ENCODE measurements at regions of chr15 and their contacts with region 1.

Region 1: GRCh38 chr15:72722071-72722696 is 36.2 kb downstream of the BBS4 start:
- DNase-seq: peak; percentile 77
- H3K4me3 Mint-ChIP-seq: no peak overlapping the region
- H3K27ac Mint-ChIP-seq: no peak overlapping the region
- H3K4me1 Mint-ChIP-seq: peaks cover 2% of the 10 kb centered on the region
- H3K27me3 Mint-ChIP-seq: no peaks in the 10 kb centered on the region

Region 2: GRCh38 chr15:72451224-72451623 is 271.0 kb before region 1 on chr15:
- CTCF ChIA-PET with region 1: no interaction called
- POLR2A ChIA-PET with region 1: no interaction called
- intact Hi-C with region 1: no loop called
- DNase-seq: no peak
- H3K4me3 Mint-ChIP-seq: no peak overlapping the region
- H3K27ac Mint-ChIP-seq: no peak overlapping the region
- H3K4me1 Mint-ChIP-seq: no peaks in the 10 kb centered on the region
- H3K27me3 Mint-ChIP-seq: no peaks in the 10 kb centered on the region

Region 3: GRCh38 chr15:72685925-72686794 is 36.0 kb before region 1 on chr15 and contains the starts of genes BBS4 and HIGD2B:
- CTCF ChIA-PET with region 1: interaction called, 14 read pairs
- POLR2A ChIA-PET with region 1: no interaction called
- intact Hi-C with region 1: no loop called
- DNase-seq: peak; percentile 93
- H3K4me3 Mint-ChIP-seq: peak within 1 kb of the TSS; percentile 85
- H3K27ac Mint-ChIP-seq: peak within 1 kb of the TSS; percentile 89
- H3K4me1 Mint-ChIP-seq: peaks cover 13% of the 10 kb centered on the region
- H3K27me3 Mint-ChIP-seq: no peaks in the 10 kb centered on the region
- total RNA-seq, gene BBS4: 12.6 to 15.5 TPM
- total RNA-seq, gene HIGD2B: 0.27 to 0.31 TPM

Region 4: DNA sequence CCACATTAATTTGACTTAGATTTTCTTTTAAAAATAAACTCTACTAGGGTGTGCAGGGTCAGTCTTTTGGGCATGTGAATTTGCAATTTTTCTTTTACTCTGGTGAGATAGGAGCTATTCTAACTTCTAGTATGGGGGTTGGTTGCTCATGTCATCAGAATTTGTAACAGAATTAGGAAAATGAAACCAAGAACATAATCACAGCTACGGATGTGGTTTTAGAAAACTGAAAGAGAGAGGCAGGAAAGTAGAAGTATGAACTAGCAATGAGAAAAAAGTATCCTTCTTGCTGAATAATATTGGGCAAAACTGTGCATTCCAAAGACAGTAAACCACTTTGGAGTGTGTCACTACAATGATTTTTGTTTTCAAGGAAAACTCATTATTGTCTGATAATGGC is 18.0 kb after region 1 on chr15:
- CTCF ChIA-PET with region 1: interaction called, 29 read pairs
- POLR2A ChIA-PET with region 1: no interaction called
- intact Hi-C with region 1: no loop called
- DNase-seq: no peak
- H3K4me3 Mint-ChIP-seq: no peak overlapping the region
- H3K27ac Mint-ChIP-seq: peak overlapping the region; percentile 43
- H3K4me1 Mint-ChIP-seq: peaks cover 35% of the 10 kb centered on the region
- H3K27me3 Mint-ChIP-seq: no peaks in the 10 kb centered on the region

Region 5: GRCh38 chr15:72758182-72758581 is 36.0 kb after region 1 on chr15:
- CTCF ChIA-PET with region 1: interaction called, 35 read pairs
- POLR2A ChIA-PET with region 1: no interaction called
- intact Hi-C with region 1: no loop called
- DNase-seq: no peak
- H3K4me3 Mint-ChIP-seq: no peak overlapping the region
- H3K27ac Mint-ChIP-seq: peak overlapping the region; percentile 8
- H3K4me1 Mint-ChIP-seq: peaks cover 26% of the 10 kb centered on the region
- H3K27me3 Mint-ChIP-seq: no peaks in the 10 kb centered on the region

Region 6: GRCh38 chr15:72783563-72784237 is 61.5 kb after region 1 on chr15 and contains the start of gene ADPGK:
- CTCF ChIA-PET with region 1: interaction called, 21 read pairs
- POLR2A ChIA-PET with region 1: interaction called, 4 read pairs
- intact Hi-C with region 1: loop called (anchors 1 kb)
- DNase-seq: peak; percentile 95
- H3K4me3 Mint-ChIP-seq: peak within 1 kb of the TSS; percentile 85
- H3K27ac Mint-ChIP-seq: peak within 1 kb of the TSS; percentile 93
- H3K4me1 Mint-ChIP-seq: peaks cover 65% of the 10 kb centered on the region
- H3K27me3 Mint-ChIP-seq: no peaks in the 10 kb centered on the region
- total RNA-seq, gene ADPGK: 60.9 to 61.5 TPM

Region 7: GRCh38 chr15:73142802-73143762 is 420.9 kb after region 1 on chr15:
- CTCF ChIA-PET with region 1: interaction called, 4 read pairs
- POLR2A ChIA-PET with region 1: no interaction called
- intact Hi-C with region 1: loop called (anchors 5 kb)
- DNase-seq: no peak
- H3K4me3 Mint-ChIP-seq: no peak overlapping the region
- H3K27ac Mint-ChIP-seq: peak overlapping the region; percentile 91
- H3K4me1 Mint-ChIP-seq: peaks cover 45% of the 10 kb centered on the region
- H3K27me3 Mint-ChIP-seq: no peaks in the 10 kb centered on the region

Region 8: GRCh38 chr15:73265536-73266153 is 543.5 kb after region 1 on chr15:
- CTCF ChIA-PET with region 1: interaction called, 21 read pairs
- POLR2A ChIA-PET with region 1: no interaction called
- intact Hi-C with region 1: no loop called
- DNase-seq: peak; percentile 72
- H3K4me3 Mint-ChIP-seq: no peak overlapping the region
- H3K27ac Mint-ChIP-seq: no peak overlapping the region
- H3K4me1 Mint-ChIP-seq: peaks cover 4% of the 10 kb centered on the region
- H3K27me3 Mint-ChIP-seq: no peaks in the 10 kb centered on the region

Region 9: GRCh38 chr15:73454096-73454495 is 731.9 kb after region 1 on chr15:
- CTCF ChIA-PET with region 1: no interaction called
- POLR2A ChIA-PET with region 1: no interaction called
- intact Hi-C with region 1: no loop called
- DNase-seq: no peak
- H3K4me3 Mint-ChIP-seq: no peak overlapping the region
- H3K27ac Mint-ChIP-seq: no peak overlapping the region
- H3K4me1 Mint-ChIP-seq: peaks cover 1% of the 10 kb centered on the region
- H3K27me3 Mint-ChIP-seq: peaks cover 4% of the 10 kb centered on the region

Measured in activated CD4-positive, alpha-beta memory T cell treated with anti-CD3 and anti-CD28 coated beads for 36 hours (primary cell).